ENCODE measurements at regions of chr3 and their contacts with region 1.

Region 1: GRCh38 chr3:186806089-186807055 is at the start of gene RFC4:
- DNase-seq: peak; percentile 70 to 71
- ATAC-seq: peak; percentile 95 to 98
- H3K4me3 ChIP-seq: peak within 1 kb of the TSS; percentile 84 to 97 (median 89)
- H3K27ac ChIP-seq: peak within 1 kb of the TSS; percentile 85 to 92 (median 88)
- H3K4me1 ChIP-seq: peaks cover 11 to 12% of the 10 kb centered on the region in 2 donors
- H3K27me3 ChIP-seq: no peaks in the 10 kb centered on the region
- CTCF ChIP-seq: no peak
- POLR2A ChIP-seq: peak; percentile 12 to 38
- total RNA-seq, gene RFC4: 4.5 to 15.1 (median 7.3) TPM

Region 2: DNA sequence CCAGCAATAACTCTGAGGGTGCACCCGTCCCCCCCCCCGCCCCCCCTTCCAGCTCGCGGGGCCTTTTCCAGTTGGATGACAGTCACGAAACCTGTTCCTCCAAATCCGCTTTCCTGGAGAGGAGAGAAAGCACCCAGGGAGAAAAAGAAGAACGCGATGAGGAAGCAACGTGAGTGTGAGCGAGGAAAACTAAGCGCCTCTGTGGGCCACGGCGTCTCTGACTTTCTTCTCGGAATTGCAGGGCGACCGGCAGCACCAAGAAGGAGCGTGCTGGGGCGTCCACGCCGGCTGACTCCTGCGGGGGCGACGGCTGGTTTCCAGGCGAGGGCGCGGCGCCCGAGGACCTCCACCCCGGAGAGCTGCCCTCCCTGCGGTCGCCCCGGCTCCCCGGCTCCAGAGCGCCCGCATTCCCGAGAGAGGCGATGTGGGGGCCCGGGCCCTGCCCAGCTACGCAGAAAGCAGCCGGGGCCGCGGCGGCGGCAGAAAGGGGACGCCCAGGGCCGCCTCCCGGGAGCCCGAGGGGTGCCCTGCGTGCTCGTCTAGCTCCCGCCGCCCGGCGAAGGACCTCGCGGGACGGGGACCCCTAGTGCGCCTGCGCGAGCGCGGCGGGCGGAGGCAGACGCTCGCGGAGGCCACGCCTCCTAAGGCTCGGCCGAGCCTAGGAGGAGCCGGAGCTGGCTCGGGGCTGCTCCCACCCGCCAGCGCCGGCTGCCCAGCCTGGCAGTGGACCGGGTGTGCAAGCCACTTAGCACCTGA is 20.8 kb after region 1 on chr3:
- in situ Hi-C with region 1: no loop called
- intact Hi-C with region 1: loop called (anchors 1 kb)
- DNase-seq: peak; percentile 45 to 67
- ATAC-seq: peak; percentile 87 to 94
- H3K4me3 ChIP-seq: peak overlapping the region; percentile 65 to 90 (median 86)
- H3K27ac ChIP-seq: peak overlapping the region in 3 of 4 donors; percentile 30 to 75 (median 49)
- H3K4me1 ChIP-seq: peaks cover 0 to 14% of the 10 kb centered on the region in 2 donors
- H3K27me3 ChIP-seq: peaks cover 45 to 64% (median 62%) of the 10 kb centered on the region in 3 donors
- CTCF ChIP-seq: no peak
- POLR2A ChIP-seq: peak; percentile 59 to 61

Region 3: GRCh38 chr3:187066228-187066995 is 260.0 kb after region 1 on chr3:
- in situ Hi-C with region 1: no loop called
- intact Hi-C with region 1: no loop called
- DNase-seq: peak; percentile 17 to 49
- ATAC-seq: peak; percentile 55 to 58
- H3K4me3 ChIP-seq: no peak overlapping the region
- H3K27ac ChIP-seq: peak overlapping the region in 3 of 4 donors; percentile 37 to 75 (median 61)
- H3K4me1 ChIP-seq: peaks cover 32 to 48% of the 10 kb centered on the region in 2 donors
- H3K27me3 ChIP-seq: no peaks in the 10 kb centered on the region
- CTCF ChIP-seq: peak in 3 of 5 experiments; percentile 26 to 44 (median 31)
- POLR2A ChIP-seq: no peak